ENCODE measurements at regions of chr11 and their contacts with region 1.

Region 1: DNA sequence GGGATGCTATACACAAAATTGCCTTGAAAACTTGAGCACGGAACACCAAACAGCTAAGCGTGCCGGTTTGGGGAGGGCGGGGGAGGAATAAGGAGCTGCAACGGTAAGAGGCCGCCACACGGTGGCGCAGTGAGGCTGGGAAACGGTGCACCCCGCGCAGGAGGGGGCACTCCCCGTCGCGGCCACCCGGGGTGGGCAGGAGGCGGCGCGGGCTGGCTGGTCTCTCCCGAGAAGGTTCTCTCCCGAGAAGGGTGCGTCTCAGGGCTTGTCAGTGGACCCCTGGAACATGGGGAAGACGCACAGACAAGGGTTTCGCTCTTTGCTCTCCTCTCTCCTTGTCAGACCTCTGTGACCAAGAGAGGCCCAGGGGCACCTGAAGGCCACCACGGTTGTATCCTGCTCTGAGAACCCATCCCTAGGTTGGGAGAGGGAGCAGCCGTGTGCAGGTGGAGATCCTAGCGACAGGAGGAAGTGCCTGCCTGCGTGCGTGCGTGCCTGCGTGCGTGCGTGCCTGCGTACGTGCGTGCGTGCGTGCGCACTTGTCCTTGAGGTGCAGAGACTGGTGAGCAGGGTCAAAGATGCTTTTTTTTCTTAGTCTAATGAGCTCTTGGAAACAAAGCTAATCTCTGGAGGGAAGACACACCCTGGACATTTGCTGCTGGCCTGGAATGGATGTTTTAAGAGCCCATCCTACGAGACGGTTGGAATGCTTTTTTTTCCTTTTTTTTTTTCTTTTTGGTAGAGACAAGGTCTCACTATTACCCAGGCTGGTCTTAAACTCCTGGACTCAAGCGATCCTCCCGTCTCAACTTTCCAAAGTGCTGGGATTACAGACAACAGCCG is 18.1 kb upstream of the JAM3 start:
- DNase-seq: peak; percentile 96
- H3K4me3 ChIP-seq: peak overlapping the region; percentile 26 to 44; a peak in 3 of 4 replicates
- H3K27ac ChIP-seq: no peak overlapping the region
- H3K4me1 ChIP-seq: peaks cover 0 to 18% of the 10 kb centered on the region in 2 experiments; a peak in 1 of 4 replicates
- H3K27me3 ChIP-seq: no peaks in the 10 kb centered on the region
- CTCF ChIP-seq: peak; percentile 92
- EP300 ChIP-seq: no peak
- RAD21 ChIP-seq: peak; percentile 93

Region 2: GRCh38 chr11:133927690-133928627 is 122.8 kb before region 1 on chr11:
- CTCF ChIA-PET with region 1: interaction called, 293 read pairs
- POLR2A ChIA-PET with region 1: interaction called, 17 read pairs
- DNase-seq: peak; percentile 94
- H3K4me3 ChIP-seq: peak overlapping the region in 1 of 2 experiments; percentile 44; a peak in 1 of 4 replicates
- H3K27ac ChIP-seq: peak overlapping the region in 1 of 2 experiments; percentile 89; a peak in 2 of 4 replicates
- H3K4me1 ChIP-seq: peaks cover 0 to 36% of the 10 kb centered on the region in 2 experiments; a peak in 1 of 4 replicates
- H3K27me3 ChIP-seq: no peaks in the 10 kb centered on the region
- CTCF ChIP-seq: peak; percentile 77
- EP300 ChIP-seq: no peak
- RAD21 ChIP-seq: peak; percentile 97

Region 3: DNA sequence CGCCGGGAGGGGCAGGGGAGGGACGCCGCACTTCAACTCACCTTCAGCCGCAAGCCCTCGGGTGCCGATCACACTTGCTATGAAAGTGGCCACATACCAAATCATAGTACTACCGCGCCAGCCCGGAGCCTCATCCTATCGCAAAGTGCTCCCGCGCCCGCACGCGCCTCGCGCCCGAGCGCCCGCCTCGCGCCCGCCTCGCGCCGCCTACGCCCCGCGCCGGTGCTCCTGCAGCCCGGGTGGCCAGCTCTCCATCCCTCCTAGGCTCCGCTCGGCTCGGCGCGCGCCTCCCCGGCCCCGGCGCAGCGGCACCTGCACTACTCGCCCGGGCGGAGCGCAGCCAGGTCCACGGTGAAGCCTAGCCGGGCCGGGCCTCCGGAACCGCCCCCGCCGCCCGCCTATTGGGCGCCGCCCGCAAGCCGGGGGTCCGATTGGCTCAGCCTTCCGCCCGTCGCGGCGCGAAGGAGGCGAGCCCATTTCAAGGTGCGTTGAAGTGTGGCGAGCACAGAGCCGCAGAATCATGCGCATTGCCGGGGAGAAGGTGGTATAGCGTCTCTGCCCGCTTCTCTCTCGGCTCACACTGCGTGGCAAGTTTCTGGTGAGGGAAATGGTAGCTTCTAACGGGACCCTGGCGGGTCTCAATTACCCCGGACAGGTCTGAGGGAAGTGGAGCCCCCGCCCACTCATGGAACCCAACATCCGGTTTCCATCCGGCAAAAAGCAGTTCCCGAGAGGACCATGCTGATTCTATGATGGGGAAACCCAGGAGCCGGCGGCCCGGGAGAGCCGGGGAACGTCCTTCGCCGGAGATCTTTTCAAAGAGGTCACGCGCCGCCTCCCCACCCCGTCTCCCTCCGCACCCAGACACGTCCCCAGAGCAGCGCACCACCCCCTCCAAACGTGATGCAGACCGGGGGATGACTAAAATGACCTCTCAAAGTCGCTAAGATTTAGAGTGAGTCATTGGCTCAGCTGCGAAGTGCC is 93.8 kb before region 1 on chr11 and contains the start of gene IGSF9B:
- CTCF ChIA-PET with region 1: interaction called, 23 read pairs
- POLR2A ChIA-PET with region 1: no interaction called
- DNase-seq: peak; percentile 98
- H3K4me3 ChIP-seq: peak within 1 kb of the TSS; percentile 63 to 64
- H3K27ac ChIP-seq: peak within 1 kb of the TSS in 1 of 2 experiments; percentile 91; a peak in 2 of 4 replicates
- H3K4me1 ChIP-seq: peaks cover 0 to 41% of the 10 kb centered on the region in 2 experiments; a peak in 2 of 4 replicates
- H3K27me3 ChIP-seq: peaks cover 17% of the 10 kb centered on the region
- CTCF ChIP-seq: no peak
- EP300 ChIP-seq: no peak
- RAD21 ChIP-seq: no peak
- polyA plus RNA-seq, gene IGSF9B: 0.41 and 0.96 TPM in 2 replicates

Region 4: GRCh38 chr11:133974836-133975487 is 75.8 kb before region 1 on chr11:
- CTCF ChIA-PET with region 1: no interaction called
- POLR2A ChIA-PET with region 1: no interaction called
- DNase-seq: no peak
- H3K4me3 ChIP-seq: no peak overlapping the region
- H3K27ac ChIP-seq: no peak overlapping the region
- H3K4me1 ChIP-seq: peaks cover 0 to 2% of the 10 kb centered on the region in 2 experiments; a peak in 1 of 4 replicates
- H3K27me3 ChIP-seq: no peaks in the 10 kb centered on the region
- CTCF ChIP-seq: no peak
- EP300 ChIP-seq: no peak
- RAD21 ChIP-seq: no peak

Region 5: DNA sequence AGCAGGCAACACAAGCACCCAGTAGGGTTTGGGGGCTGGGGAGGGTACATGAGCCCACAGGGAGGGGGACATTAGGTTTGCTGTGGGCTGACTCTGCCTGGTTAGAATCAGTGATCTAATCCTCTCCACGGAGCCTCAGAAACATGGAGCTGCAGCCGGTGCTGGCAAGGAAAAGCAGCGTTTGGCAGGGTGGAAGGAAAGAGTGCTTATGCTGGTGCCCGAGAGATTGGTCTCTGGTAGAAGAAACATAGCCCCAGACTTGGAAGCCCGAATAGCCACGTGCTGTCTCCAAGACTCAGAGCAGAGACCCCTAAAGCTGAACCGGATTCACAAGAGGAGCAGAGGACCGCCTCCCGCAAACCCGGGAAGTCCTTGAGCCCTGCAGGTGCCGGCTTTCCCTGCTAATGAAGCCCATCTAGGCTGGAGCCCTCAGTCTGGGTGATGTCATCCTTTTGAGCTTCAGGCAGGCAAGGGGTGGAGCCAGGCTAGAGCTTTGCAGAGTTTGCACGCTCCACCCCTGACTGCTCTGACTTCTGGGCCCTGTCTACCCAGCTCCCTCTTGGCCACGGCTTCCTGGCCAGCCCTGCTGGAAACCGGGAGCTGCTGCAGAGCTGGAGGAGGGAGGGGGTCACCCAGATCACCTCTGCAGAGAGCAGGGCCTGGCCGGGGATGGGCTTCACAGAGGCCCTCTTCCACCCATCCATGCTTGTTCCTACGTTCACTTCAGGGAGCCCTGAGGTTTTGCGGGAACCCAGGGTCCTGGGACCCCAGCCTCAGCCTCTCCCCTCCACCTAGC is 16.9 kb before region 1 on chr11:
- CTCF ChIA-PET with region 1: interaction called, 18 read pairs
- POLR2A ChIA-PET with region 1: interaction called, 7 read pairs
- DNase-seq: peak; percentile 88
- H3K4me3 ChIP-seq: peak overlapping the region in 1 of 2 experiments; percentile 25; a peak in 2 of 4 replicates
- H3K27ac ChIP-seq: peak overlapping the region in 1 of 2 experiments; percentile 95; a peak in 2 of 4 replicates
- H3K4me1 ChIP-seq: peaks cover 13 to 59% of the 10 kb centered on the region in 2 experiments
- H3K27me3 ChIP-seq: peaks cover 4% of the 10 kb centered on the region; the same call in 1 of the 2 replicates
- CTCF ChIP-seq: no peak
- EP300 ChIP-seq: peak in 1 of 2 experiments; percentile 25; a peak in 1 of 4 replicates
- RAD21 ChIP-seq: no peak; the same call in 1 of the 2 replicates

Region 6: GRCh38 chr11:134086376-134086775 is 35.6 kb after region 1 on chr11:
- CTCF ChIA-PET with region 1: interaction called, 13 read pairs
- POLR2A ChIA-PET with region 1: no interaction called
- DNase-seq: no peak
- H3K4me3 ChIP-seq: no peak overlapping the region
- H3K27ac ChIP-seq: no peak overlapping the region
- H3K4me1 ChIP-seq: no peaks in the 10 kb centered on the region; a peak in 1 of 4 replicates
- H3K27me3 ChIP-seq: no peaks in the 10 kb centered on the region
- CTCF ChIP-seq: no peak
- EP300 ChIP-seq: no peak
- RAD21 ChIP-seq: no peak

Region 7: GRCh38 chr11:134139873-134140331 is 89.1 kb after region 1 on chr11:
- CTCF ChIA-PET with region 1: interaction called, 82 read pairs
- POLR2A ChIA-PET with region 1: interaction called, 5 read pairs
- DNase-seq: peak; percentile 83
- H3K4me3 ChIP-seq: peak overlapping the region in 1 of 2 experiments; percentile 18; a peak in 1 of 4 replicates
- H3K27ac ChIP-seq: no peak overlapping the region; a peak in 1 of 4 replicates
- H3K4me1 ChIP-seq: no peaks in the 10 kb centered on the region; a peak in 1 of 4 replicates
- H3K27me3 ChIP-seq: no peaks in the 10 kb centered on the region
- CTCF ChIP-seq: peak; percentile 89
- EP300 ChIP-seq: no peak
- RAD21 ChIP-seq: peak; percentile 96